Activated naive CD4-positive, alpha-beta T cell treated with anti-CD3 and anti-CD28 coated beads for 36 hours (primary cell): ENCODE measurements at regions of chr7 and their contacts with region 1.

Region 1: GRCh38 chr7:70668606-70669358 is 463.2 kb upstream of the GALNT17 start:
- DNase-seq: no peak
- H3K4me3 Mint-ChIP-seq: no peak overlapping the region
- H3K27ac Mint-ChIP-seq: no peak overlapping the region
- H3K4me1 Mint-ChIP-seq: no peaks in the 10 kb centered on the region
- H3K27me3 Mint-ChIP-seq: peaks cover 4% of the 10 kb centered on the region

Region 2: GRCh38 chr7:70456719-70457118 is 212.1 kb before region 1 on chr7:
- CTCF ChIA-PET with region 1: no interaction called
- intact Hi-C with region 1: loop called (anchors 10 kb)
- DNase-seq: peak; percentile 6
- H3K4me3 Mint-ChIP-seq: no peak overlapping the region
- H3K27ac Mint-ChIP-seq: no peak overlapping the region
- H3K4me1 Mint-ChIP-seq: peaks cover 16% of the 10 kb centered on the region
- H3K27me3 Mint-ChIP-seq: no peaks in the 10 kb centered on the region

Region 3: GRCh38 chr7:70710011-70710480 is 41.3 kb after region 1 on chr7:
- CTCF ChIA-PET with region 1: no interaction called
- intact Hi-C with region 1: no loop called
- DNase-seq: no peak
- H3K4me3 Mint-ChIP-seq: no peak overlapping the region
- H3K27ac Mint-ChIP-seq: no peak overlapping the region
- H3K4me1 Mint-ChIP-seq: no peaks in the 10 kb centered on the region
- H3K27me3 Mint-ChIP-seq: no peaks in the 10 kb centered on the region